MCF 10A (cell line): ENCODE measurements at regions of chr3 and their contacts with region 1.

Region 1: DNA sequence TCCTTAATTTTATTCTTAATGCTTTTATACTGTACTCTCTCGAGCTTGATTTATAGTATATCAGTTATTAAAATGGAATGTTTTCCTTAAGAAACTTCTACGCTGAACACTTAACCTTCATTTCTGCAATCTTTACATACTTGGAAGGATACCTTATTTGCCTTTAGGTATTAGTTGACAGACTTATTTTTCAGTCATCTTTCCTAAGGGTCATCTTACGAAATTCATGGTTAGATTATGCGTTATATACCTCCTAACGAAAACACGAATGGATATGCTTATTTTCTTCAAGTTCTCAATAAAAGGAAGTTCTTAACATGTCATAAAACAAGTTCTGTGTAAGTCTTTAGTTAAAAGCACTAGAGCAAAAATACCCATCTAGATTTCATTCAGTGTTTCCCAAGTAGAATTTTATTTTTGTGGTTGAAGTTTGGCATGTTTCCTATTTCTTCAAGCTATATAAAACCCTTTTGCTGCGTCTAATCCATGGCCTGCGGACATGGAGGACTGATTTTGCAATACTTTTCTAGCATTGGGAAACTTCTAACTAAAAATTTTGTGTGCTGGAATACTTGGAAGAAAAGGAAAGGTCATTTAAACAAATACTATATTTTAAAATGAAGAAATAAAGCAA is 231.3 kb downstream of the TP63 start:
- DNase-seq: peak; percentile 95
- H3K4me3 Mint-ChIP-seq: peak overlapping the region; percentile 35
- H3K27ac Mint-ChIP-seq: peak overlapping the region; percentile 96
- H3K4me1 Mint-ChIP-seq: peaks cover 21% of the 10 kb centered on the region
- H3K27me3 Mint-ChIP-seq: no peaks in the 10 kb centered on the region
- CTCF ChIP-seq: no peak

Region 2: DNA sequence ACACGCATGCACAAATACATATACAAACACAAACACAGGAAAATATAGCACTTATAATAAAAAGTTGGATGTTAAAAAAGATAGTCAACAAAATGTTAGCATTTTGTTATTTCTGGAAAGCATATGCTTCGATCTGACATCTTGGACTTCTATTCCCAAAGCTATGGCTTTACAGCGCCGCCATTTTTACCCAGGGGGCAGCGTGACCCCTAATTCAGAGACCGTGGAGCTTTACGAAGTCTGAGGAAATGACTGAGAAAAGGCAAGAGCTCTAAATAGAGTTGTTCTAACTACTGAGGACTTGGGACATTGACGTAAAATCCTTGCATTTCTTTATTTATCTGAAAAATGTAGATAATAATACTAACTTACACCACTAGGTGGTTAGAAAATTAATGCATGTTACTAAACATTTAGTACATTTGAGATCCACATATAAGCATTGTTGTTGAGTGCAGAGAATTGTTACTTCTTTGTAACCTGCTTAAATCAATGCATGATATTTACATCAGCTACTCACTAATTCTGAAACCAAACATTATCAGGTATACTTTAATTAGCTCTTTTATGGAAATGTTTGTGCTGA is 75.9 kb before region 1 on chr3:
- CTCF ChIA-PET with region 1: no interaction called
- POLR2A ChIA-PET with region 1: interaction called, 25 read pairs
- intact Hi-C with region 1: no loop called
- DNase-seq: no peak
- H3K4me3 Mint-ChIP-seq: no peak overlapping the region
- H3K27ac Mint-ChIP-seq: no peak overlapping the region
- H3K4me1 Mint-ChIP-seq: peaks cover 5% of the 10 kb centered on the region
- H3K27me3 Mint-ChIP-seq: no peaks in the 10 kb centered on the region
- CTCF ChIP-seq: peak; percentile 20

Region 3: DNA sequence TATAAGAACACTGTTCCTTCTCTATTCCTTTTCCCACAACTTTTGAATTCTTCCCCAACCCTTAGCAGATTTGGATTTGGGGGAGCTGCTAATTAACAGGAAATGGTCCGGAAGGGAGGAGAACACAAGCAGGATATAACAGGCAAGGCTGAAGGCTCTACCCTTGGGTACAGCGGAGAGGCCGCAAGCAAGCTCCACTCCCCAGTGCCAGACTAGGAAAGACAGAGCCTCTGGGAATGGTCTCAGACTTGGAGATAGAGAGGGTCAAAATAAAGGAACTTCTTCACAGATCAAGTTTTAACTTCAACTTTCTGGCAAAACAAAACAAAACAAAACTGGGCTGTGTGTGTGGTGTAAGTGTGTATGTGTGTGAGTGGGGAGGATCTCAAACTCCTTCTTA is 70.4 kb before region 1 on chr3:
- CTCF ChIA-PET with region 1: no interaction called
- POLR2A ChIA-PET with region 1: interaction called, 25 read pairs
- intact Hi-C with region 1: loop called (anchors 2 kb)
- DNase-seq: peak; percentile 59
- H3K4me3 Mint-ChIP-seq: peak overlapping the region; percentile 76
- H3K27ac Mint-ChIP-seq: peak overlapping the region; percentile 99
- H3K4me1 Mint-ChIP-seq: peaks cover 19% of the 10 kb centered on the region
- H3K27me3 Mint-ChIP-seq: no peaks in the 10 kb centered on the region
- CTCF ChIP-seq: no peak

Region 4: GRCh38 chr3:189824629-189825312 is 37.7 kb before region 1 on chr3:
- CTCF ChIA-PET with region 1: no interaction called
- POLR2A ChIA-PET with region 1: interaction called, 27 read pairs
- intact Hi-C with region 1: no loop called
- DNase-seq: peak; percentile 96
- H3K4me3 Mint-ChIP-seq: peak overlapping the region; percentile 42
- H3K27ac Mint-ChIP-seq: peak overlapping the region; percentile 83
- H3K4me1 Mint-ChIP-seq: peaks cover 31% of the 10 kb centered on the region
- H3K27me3 Mint-ChIP-seq: no peaks in the 10 kb centered on the region
- CTCF ChIP-seq: no peak

Region 5: GRCh38 chr3:189833996-189834395 is 28.5 kb before region 1 on chr3:
- CTCF ChIA-PET with region 1: no interaction called
- POLR2A ChIA-PET with region 1: interaction called, 109 read pairs
- intact Hi-C with region 1: no loop called
- DNase-seq: peak; percentile 99
- H3K4me3 Mint-ChIP-seq: peak overlapping the region; percentile 26
- H3K27ac Mint-ChIP-seq: peak overlapping the region; percentile 37
- H3K4me1 Mint-ChIP-seq: peaks cover 41% of the 10 kb centered on the region
- H3K27me3 Mint-ChIP-seq: no peaks in the 10 kb centered on the region
- CTCF ChIP-seq: no peak

Region 6: GRCh38 chr3:189848395-189849040 is 14.0 kb before region 1 on chr3:
- CTCF ChIA-PET with region 1: interaction called, 3 read pairs
- POLR2A ChIA-PET with region 1: interaction called, 109 read pairs
- intact Hi-C with region 1: no loop called
- DNase-seq: no peak
- H3K4me3 Mint-ChIP-seq: no peak overlapping the region
- H3K27ac Mint-ChIP-seq: no peak overlapping the region
- H3K4me1 Mint-ChIP-seq: peaks cover 6% of the 10 kb centered on the region
- H3K27me3 Mint-ChIP-seq: no peaks in the 10 kb centered on the region
- CTCF ChIP-seq: no peak

Region 7: DNA sequence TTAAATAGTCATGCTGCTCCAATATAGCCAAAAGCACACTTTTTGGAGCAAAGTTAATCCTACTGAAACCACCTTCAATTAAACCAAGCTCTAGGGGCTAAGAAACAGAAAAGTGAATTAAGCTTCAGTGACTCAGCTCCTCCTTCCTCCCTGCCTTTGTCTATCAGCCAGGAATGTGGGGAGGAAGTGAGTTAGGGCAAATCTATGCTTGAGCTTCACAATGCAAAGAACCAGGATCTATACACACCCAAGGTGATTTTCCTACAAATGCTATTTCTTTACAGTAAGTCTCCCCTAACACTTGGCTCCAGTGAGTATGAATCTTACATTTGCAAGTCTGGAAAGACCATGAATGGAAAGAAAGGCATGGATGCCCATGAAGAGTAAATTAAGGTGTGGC is 46.1 kb after region 1 on chr3:
- CTCF ChIA-PET with region 1: interaction called, 5 read pairs
- POLR2A ChIA-PET with region 1: interaction called, 25 read pairs
- intact Hi-C with region 1: no loop called
- DNase-seq: peak; percentile 86
- H3K4me3 Mint-ChIP-seq: no peak overlapping the region
- H3K27ac Mint-ChIP-seq: peak overlapping the region; percentile 80
- H3K4me1 Mint-ChIP-seq: peaks cover 33% of the 10 kb centered on the region
- H3K27me3 Mint-ChIP-seq: no peaks in the 10 kb centered on the region
- CTCF ChIP-seq: no peak